ENCODE measurements at regions of chr2 and their contacts with region 1.

Region 1: GRCh38 chr2:69914170-69914960 is 544 bp upstream of the MXD1 start:
- DNase-seq: peak; percentile 91 to 100 (median 100)
- H3K4me3 ChIP-seq: peak overlapping the region; percentile 60 to 99 (median 87)
- H3K27ac ChIP-seq: peak overlapping the region; percentile 89 to 100 (median 99)
- H3K27me3 ChIP-seq: no peaks in the 10 kb centered on the region
- CTCF ChIP-seq: peak in 53 of 56 donors; percentile 13 to 75 (median 52)

Region 2: GRCh38 chr2:69734035-69734631 is 180.2 kb before region 1 on chr2:
- intact Hi-C with region 1: no loop called
- DNase-seq: no peak
- H3K4me3 ChIP-seq: no peak overlapping the region
- H3K27ac ChIP-seq: no peak overlapping the region
- H3K27me3 ChIP-seq: no peaks in the 10 kb centered on the region
- CTCF ChIP-seq: no peak

Region 3: DNA sequence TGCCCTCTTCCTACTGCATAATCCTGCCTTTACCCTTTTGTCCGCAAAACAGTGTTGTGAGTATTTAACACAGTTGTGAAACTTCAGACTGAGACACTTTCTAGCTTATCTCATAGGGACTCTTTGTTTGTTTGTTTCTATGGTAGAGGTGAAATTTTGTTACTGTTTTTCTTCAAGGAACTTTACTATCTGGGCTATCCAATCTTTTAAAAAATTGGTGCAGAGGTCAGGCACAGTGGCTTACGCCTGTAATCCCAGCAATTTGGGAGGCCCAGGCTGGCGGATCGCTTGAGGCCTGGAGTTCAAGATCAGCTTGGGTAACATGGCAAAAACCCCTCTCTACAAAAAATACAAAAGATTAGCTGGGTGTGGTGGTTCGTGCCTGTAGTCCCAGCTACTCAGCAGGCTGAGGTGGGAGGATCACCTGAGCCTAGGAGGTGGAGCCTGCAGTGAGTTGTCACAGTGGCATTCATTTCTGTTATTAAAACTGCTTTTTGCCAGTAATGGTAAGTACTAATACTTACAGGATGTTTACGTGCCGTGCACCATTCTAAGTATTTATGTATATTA is 66.1 kb before region 1 on chr2:
- intact Hi-C with region 1: no loop called
- DNase-seq: no peak
- H3K4me3 ChIP-seq: no peak overlapping the region
- H3K27ac ChIP-seq: no peak overlapping the region
- H3K27me3 ChIP-seq: no peaks in the 10 kb centered on the region
- CTCF ChIP-seq: no peak

Region 4: DNA sequence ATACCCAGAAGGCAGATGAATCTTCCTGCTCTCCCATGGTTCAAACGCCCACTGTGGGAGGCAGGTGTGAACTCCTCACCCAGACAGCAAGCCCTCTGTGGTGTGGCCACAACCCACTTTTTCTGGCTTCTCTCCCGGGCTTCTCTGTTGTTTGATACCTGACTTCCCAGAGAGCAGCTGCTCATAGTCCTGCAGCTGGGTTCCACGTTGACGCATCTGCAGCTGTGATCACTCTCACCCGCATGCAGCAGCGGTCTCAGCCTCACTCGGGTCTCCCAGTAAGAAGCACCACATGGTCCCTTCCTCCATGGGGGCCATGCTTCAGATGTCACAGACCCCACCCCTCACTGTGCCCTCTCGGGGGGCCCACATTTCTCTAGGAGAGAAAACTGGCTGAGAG is 43.6 kb after region 1 on chr2:
- intact Hi-C with region 1: loop called in 1 of 2 experiments (anchors 5 kb)
- DNase-seq: no peak
- H3K4me3 ChIP-seq: no peak overlapping the region
- H3K27ac ChIP-seq: no peak overlapping the region
- H3K27me3 ChIP-seq: no peaks in the 10 kb centered on the region
- CTCF ChIP-seq: no peak

Region 5: GRCh38 chr2:70029814-70030409 is 115.5 kb after region 1 on chr2:
- intact Hi-C with region 1: no loop called
- DNase-seq: peak in 7 of 10 donors; percentile 37 to 65 (median 59)
- H3K4me3 ChIP-seq: peak overlapping the region in 7 of 59 donors; percentile 3 to 17 (median 10)
- H3K27ac ChIP-seq: peak overlapping the region; percentile 18 to 94 (median 84)
- H3K27me3 ChIP-seq: no peaks in the 10 kb centered on the region
- CTCF ChIP-seq: no peak

Region 6: GRCh38 chr2:70070541-70071268 is 156.3 kb after region 1 on chr2:
- intact Hi-C with region 1: loop called (anchors 1 to 5 kb)
- DNase-seq: peak in 9 of 10 donors; percentile 53 to 89 (median 66)
- H3K4me3 ChIP-seq: peak overlapping the region in 35 of 59 donors; percentile 0 to 51 (median 22)
- H3K27ac ChIP-seq: peak overlapping the region; percentile 72 to 99 (median 92)
- H3K27me3 ChIP-seq: no peaks in the 10 kb centered on the region
- CTCF ChIP-seq: peak; percentile 73 to 97 (median 85)

Region 7: GRCh38 chr2:70086838-70087701 is 172.7 kb after region 1 on chr2 and contains the start of gene PCBP1:
- intact Hi-C with region 1: loop called (anchors 1 kb)
- DNase-seq: peak; percentile 81 to 92 (median 88)
- H3K4me3 ChIP-seq: peak within 1 kb of the TSS; percentile 61 to 99 (median 92)
- H3K27ac ChIP-seq: peak within 1 kb of the TSS; percentile 100
- H3K27me3 ChIP-seq: no peaks in the 10 kb centered on the region
- CTCF ChIP-seq: peak in 2 of 56 donors; percentile 6 to 8
- total RNA-seq, gene PCBP1: 118 to 237 (median 174) TPM

Region 8: DNA sequence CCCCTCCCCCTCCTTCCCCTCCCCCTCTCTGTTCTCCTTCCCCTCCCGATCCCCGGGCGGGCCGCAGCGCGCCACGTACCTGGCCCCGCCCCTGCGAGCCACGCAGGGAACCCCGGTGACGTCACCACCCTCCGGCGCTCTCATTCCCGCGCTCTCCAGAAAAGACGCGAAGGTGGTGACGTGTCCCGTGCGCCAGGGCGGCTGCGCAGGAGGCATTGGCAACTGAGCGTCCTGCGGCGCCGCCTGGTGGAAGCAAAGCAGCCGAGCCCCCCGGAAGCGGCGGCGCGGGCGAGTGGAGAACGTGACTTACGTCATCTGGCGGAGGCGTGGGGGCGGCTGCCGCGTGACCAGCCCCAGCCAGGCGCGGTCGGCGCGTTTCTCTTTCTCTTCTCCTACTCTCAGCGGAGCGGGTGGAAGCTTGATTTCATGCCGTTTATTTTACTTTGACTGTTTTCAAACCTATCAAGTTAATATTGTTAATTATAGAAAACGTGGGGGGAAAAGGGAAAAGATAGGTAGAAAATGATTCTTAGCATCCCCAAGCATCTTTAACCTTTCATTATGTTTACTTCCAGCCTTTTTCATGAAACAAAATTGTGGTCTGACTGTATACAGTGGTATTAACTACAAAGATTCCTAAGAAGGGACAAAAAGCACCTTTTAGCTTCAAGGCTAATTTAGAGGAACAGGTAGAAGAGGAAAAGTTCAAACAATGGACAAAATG is 228.4 kb after region 1 on chr2:
- intact Hi-C with region 1: loop called (anchors 1 kb)
- DNase-seq: peak; percentile 89 to 96 (median 94)
- H3K4me3 ChIP-seq: peak overlapping the region; percentile 43 to 88 (median 75)
- H3K27ac ChIP-seq: peak overlapping the region; percentile 90 to 100 (median 100)
- H3K27me3 ChIP-seq: no peaks in the 10 kb centered on the region
- CTCF ChIP-seq: peak; percentile 92 to 100 (median 97)

Region 9: DNA sequence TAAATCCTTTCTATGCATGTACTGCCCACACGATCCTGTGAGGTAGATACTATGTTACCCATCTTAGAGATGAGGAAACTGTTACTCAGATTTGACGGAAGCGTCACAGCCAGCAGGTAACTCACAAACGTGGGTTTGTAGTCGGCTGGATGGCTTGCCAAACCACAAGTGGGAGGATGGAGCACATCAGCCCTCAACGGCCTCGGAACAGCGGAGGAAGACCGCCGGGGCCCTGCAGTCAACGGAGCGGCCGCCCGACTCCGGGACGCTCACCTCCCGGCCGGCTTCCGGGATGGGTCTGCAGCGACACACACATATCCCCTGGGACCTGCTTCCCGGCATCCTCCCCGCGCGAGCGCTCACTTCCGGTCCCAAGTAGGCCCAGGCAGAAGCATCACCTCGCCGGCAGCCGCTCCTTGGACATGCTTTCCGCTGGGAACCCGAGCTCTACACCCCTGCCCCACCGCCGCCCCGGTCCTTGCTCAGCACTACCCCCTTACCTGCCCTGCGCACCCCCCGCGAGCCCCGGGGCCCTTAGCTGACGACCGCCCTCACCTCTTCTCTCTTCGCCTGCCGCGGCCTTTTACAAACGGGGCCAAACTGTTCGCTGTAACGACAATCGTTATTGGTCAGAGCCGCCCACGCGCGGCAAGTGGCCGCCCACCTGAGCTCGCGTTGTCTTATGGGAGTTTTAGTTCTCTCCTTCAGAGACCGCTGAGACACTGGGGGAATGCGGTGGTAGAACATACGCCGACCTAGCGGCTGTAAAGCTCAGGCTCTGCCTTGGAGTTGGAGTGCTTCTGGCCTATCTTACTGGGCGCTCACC is 276.3 kb after region 1 on chr2 and contains the start of gene C2orf42:
- intact Hi-C with region 1: loop called (anchors 2 to 5 kb)
- DNase-seq: peak; percentile 93 to 98 (median 96)
- H3K4me3 ChIP-seq: peak within 1 kb of the TSS; percentile 45 to 99 (median 86)
- H3K27ac ChIP-seq: peak within 1 kb of the TSS; percentile 87 to 99 (median 96)
- H3K27me3 ChIP-seq: no peaks in the 10 kb centered on the region
- CTCF ChIP-seq: peak in 30 of 56 donors; percentile 7 to 51 (median 22)
- total RNA-seq, gene C2orf42: 20.6 to 44.6 (median 32.0) TPM

Region 10: GRCh38 chr2:70248181-70248847 is 333.9 kb after region 1 on chr2 and contains the start of gene TIA1:
- intact Hi-C with region 1: loop called (anchors 1 to 10 kb)
- DNase-seq: peak; percentile 91 to 96 (median 94)
- H3K4me3 ChIP-seq: peak within 1 kb of the TSS; percentile 62 to 100 (median 92)
- H3K27ac ChIP-seq: peak within 1 kb of the TSS; percentile 77 to 100 (median 98)
- H3K27me3 ChIP-seq: no peaks in the 10 kb centered on the region
- CTCF ChIP-seq: peak in 8 of 56 donors; percentile 4 to 35 (median 14)
- total RNA-seq, gene TIA1: 80.0 to 187 (median 133) TPM